Activated CD4-positive, alpha-beta memory T cell treated with anti-CD3 and anti-CD28 coated beads for 36 hours (primary cell): ENCODE measurements at regions of chr14 and their contacts with region 1.

Region 1: DNA sequence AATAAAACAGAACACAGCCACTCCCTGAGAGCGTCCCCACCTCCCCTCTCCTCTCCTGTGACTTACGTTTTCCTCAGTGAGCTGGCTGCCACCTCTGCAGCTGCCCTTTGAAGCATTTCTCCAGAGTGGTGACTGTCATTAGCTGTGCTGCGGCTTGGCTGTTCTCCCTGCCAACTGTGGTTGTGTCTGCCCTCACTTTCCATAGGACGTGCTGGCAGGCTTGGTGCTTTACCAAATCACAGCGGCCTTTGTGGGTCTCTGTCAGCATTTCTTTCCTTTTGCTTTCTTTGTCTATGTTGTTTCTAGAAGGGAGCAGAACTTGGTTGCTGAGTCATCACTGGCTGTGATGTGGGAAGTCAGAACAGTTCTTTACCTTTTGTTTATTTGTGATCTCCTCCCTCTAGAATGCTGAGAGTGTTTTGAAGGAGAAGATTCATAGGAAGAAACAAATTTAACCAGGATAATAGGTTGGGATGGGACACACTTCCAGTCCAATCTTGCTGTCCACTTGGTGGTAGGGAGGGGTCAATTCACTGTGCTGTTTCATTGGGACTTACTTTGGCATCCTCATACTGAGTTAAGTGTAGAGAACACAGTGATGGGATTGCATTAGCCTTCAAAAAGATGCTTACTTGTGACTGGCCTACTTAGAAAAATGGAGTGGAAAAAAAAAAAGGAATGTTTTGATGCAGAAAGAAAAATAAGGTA is 88.2 kb downstream of the TMX1 start:
- DNase-seq: peak; percentile 70
- H3K4me3 Mint-ChIP-seq: no peak overlapping the region
- H3K27ac Mint-ChIP-seq: no peak overlapping the region
- H3K4me1 Mint-ChIP-seq: peaks cover 11% of the 10 kb centered on the region
- H3K27me3 Mint-ChIP-seq: peaks cover 41% of the 10 kb centered on the region

Region 2: GRCh38 chr14:51239813-51240803 is 88.1 kb before region 1 on chr14 and contains the start of gene TMX1:
- CTCF ChIA-PET with region 1: no interaction called
- POLR2A ChIA-PET with region 1: no interaction called
- intact Hi-C with region 1: no loop called
- DNase-seq: peak; percentile 94
- H3K4me3 Mint-ChIP-seq: no peak within 1 kb of the TSS
- H3K27ac Mint-ChIP-seq: no peak within 1 kb of the TSS
- H3K4me1 Mint-ChIP-seq: peaks cover 37% of the 10 kb centered on the region
- H3K27me3 Mint-ChIP-seq: no peaks in the 10 kb centered on the region
- total RNA-seq, gene TMX1: 57.1 to 58.1 TPM

Region 3: DNA sequence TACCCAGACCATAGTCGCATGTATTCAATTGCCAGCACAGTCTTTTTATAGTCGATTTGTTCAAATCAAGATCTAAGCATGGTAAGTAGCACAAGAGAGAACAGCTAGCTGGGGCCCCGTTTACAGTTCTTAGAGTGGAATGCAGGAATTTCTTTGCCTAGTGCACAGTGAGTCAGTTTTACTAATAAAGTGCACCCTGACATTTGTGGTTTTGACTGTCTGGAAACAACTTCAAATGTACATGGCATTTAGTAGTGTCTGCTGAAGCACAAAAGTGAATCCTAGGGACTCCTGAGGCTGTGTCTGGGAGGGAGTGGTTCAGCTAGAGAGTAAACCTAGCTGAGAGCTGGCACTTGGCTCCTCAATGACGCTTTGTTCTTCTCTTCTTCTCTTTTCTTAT is 23.3 kb before region 1 on chr14:
- CTCF ChIA-PET with region 1: no interaction called
- POLR2A ChIA-PET with region 1: no interaction called
- intact Hi-C with region 1: loop called (anchors 2 kb)
- DNase-seq: no peak
- H3K4me3 Mint-ChIP-seq: no peak overlapping the region
- H3K27ac Mint-ChIP-seq: no peak overlapping the region
- H3K4me1 Mint-ChIP-seq: peaks cover 12% of the 10 kb centered on the region
- H3K27me3 Mint-ChIP-seq: peaks cover 3% of the 10 kb centered on the region

Region 4: DNA sequence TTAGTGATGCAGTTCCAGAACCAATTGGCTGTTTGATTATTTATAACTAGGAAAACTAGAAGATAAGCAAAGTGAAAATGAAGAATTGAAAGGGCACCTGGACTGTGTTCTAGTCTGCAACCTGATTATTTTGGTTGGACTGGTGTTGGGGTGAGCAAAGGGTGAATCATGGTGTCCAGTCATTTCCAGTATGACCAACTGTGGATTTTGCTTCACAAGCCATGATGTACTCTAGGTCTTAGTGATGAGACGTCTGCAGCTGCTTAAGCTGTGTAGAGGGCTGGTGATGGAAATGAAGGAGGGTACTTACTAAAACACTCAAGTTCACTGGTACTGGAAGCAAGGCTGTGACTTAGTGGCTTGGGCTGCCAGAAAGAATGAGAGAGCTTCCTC is 130.3 kb after region 1 on chr14:
- CTCF ChIA-PET with region 1: no interaction called
- POLR2A ChIA-PET with region 1: no interaction called
- intact Hi-C with region 1: no loop called
- DNase-seq: no peak
- H3K4me3 Mint-ChIP-seq: no peak overlapping the region
- H3K27ac Mint-ChIP-seq: no peak overlapping the region
- H3K4me1 Mint-ChIP-seq: no peaks in the 10 kb centered on the region
- H3K27me3 Mint-ChIP-seq: peaks cover 2% of the 10 kb centered on the region